ENCODE measurements at regions of chr9 and their contacts with region 1.

Region 1: DNA sequence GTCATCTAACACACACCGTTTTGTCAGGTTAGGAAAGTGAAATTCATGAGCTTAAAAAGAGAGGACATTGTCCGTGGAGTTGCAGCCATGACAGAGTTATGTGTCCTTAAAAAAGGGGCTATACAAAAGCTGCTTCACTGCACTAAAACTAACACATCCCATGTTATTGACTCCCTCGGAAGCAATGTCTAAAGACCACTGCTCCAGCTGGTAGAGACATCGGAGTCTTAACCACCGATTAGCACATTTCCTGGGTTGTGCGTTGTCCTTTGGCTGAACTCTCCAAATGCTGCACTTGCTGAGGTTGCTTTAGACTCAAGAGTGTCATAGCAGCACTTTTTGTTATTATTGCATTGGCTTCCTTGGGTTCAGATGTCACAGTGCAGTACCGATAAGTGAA is 128.3 kb upstream of the C9orf72 start:
- DNase-seq: no peak
- H3K4me3 ChIP-seq: no peak overlapping the region
- H3K27ac ChIP-seq: no peak overlapping the region
- H3K4me1 ChIP-seq: no peaks in the 10 kb centered on the region
- H3K27me3 ChIP-seq: peaks cover 3% of the 10 kb centered on the region
- CTCF ChIP-seq: no peak

Region 2: DNA sequence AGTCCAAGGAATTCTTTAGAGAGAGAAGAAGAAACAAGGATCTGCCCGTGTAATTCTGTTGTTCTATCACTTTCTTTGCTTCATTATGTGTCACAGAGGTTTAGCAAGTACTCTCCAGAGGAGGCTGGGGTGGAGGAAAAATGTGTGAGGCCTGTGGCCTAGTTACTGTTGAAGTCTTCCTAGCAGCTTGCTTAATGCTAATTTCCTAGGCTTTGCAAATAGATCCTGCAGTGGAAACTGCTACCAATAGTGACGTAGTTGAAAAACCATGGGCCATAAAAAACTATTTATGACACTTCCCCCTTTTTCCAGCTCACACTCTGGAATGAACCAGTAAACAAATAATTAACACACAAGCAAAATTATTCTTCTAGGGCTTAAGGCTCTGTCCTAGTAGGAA is 101.3 kb before region 1 on chr9:
- CTCF ChIA-PET with region 1: no interaction called
- dilution Hi-C with region 1: no loop called
- in situ Hi-C with region 1: no loop called
- intact Hi-C with region 1: no loop called
- DNase-seq: no peak
- H3K4me3 ChIP-seq: no peak overlapping the region
- H3K27ac ChIP-seq: no peak overlapping the region
- H3K4me1 ChIP-seq: no peaks in the 10 kb centered on the region
- H3K27me3 ChIP-seq: no peaks in the 10 kb centered on the region
- CTCF ChIP-seq: no peak

Region 3: GRCh38 chr9:27665136-27665535 is 36.5 kb before region 1 on chr9:
- CTCF ChIA-PET with region 1: no interaction called
- dilution Hi-C with region 1: loop called (anchors 5 kb)
- in situ Hi-C with region 1: no loop called
- intact Hi-C with region 1: no loop called
- DNase-seq: no peak
- H3K4me3 ChIP-seq: no peak overlapping the region
- H3K27ac ChIP-seq: no peak overlapping the region
- H3K4me1 ChIP-seq: peaks cover 3% of the 10 kb centered on the region
- H3K27me3 ChIP-seq: no peaks in the 10 kb centered on the region
- CTCF ChIP-seq: no peak

Region 4: DNA sequence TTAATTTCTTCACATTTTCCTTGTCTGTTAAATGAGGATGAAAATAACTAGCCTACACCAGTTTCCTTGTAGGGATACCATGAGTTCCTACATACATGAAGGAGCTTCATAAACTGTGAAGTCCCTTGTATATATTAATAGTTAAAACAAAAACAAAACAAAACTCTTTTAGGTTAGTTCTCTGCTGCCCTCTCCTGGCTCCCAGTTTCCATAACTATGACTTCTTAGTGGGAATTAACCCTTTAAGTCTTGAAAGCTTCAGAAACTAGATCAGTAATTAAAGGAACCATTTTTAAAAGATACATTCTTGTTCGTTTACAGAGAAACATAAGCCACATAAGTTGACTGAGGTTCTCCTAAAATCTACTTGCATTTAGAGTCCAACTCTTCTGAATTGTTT is 371.7 kb after region 1 on chr9:
- CTCF ChIA-PET with region 1: no interaction called
- dilution Hi-C with region 1: loop called (anchors 25 kb)
- in situ Hi-C with region 1: no loop called
- intact Hi-C with region 1: no loop called
- DNase-seq: peak; percentile 32
- H3K4me3 ChIP-seq: no peak overlapping the region
- H3K27ac ChIP-seq: no peak overlapping the region
- H3K4me1 ChIP-seq: no peaks in the 10 kb centered on the region
- H3K27me3 ChIP-seq: peaks cover 2% of the 10 kb centered on the region
- CTCF ChIP-seq: peak; percentile 49 to 65

Measured in mammary epithelial cell (primary cell).